ENCODE measurements at regions of chr11 and their contacts with region 1.

Region 1: GRCh38 chr11:88414385-88414861 is 76.9 kb upstream of the CTSC start:
- DNase-seq: peak; percentile 35
- ATAC-seq: peak; percentile 57
- H3K4me3 Mint-ChIP-seq: peak overlapping the region; percentile 33
- H3K27ac Mint-ChIP-seq: no peak overlapping the region
- H3K4me1 Mint-ChIP-seq: peaks cover 26% of the 10 kb centered on the region
- H3K27me3 Mint-ChIP-seq: no peaks in the 10 kb centered on the region
- CTCF ChIP-seq: no peak

Region 2: DNA sequence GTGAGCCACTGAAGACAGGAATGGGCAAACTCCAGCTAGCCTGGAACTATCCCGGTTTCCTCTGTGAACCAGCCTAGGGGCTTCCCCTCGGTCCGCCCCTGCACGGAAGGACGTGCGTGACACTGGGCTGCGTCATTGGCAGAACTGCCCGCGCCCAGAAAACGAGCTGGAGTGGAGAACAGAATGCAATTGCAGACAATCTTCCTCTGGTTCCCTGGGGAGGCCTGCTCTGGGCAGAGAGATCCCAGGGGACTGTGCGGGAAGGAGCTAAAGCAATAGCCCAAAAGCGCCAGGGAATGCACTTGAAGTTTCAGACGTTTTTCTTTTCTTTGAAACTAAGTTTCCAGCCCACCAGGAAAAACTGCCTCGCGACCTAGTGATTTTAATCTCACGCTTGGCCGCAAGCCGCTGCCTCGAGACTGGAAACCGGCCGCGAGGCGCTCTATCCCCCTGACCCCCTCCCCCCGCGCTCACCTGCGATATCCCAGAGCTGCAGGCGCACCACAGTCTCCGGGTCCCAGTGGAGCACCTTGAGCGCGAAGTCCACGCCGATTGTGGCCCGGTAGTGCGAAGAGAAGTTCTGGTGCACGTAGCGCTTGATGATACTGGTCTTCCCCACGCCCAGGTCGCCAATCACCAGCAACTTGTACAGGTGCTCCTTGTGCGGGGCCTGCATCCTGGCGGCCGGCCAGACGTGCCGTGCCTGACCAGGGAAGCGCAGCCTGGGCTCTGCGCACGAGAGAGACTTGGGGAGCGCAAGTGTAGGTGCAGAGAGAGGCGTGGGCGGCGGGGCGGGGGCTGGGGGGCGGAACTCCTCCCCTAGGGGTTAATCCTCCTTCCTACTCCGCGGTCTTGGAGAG is 239.5 kb before region 1 on chr11 and contains the start of gene RAB38:
- CTCF ChIA-PET with region 1: no interaction called
- POLR2A ChIA-PET with region 1: no interaction called
- intact Hi-C with region 1: loop called (anchors 10 kb)
- DNase-seq: peak; percentile 76
- ATAC-seq: peak; percentile 59
- H3K4me3 Mint-ChIP-seq: peak within 1 kb of the TSS; percentile 72
- H3K27ac Mint-ChIP-seq: peak within 1 kb of the TSS; percentile 79
- H3K4me1 Mint-ChIP-seq: peaks cover 41% of the 10 kb centered on the region
- H3K27me3 Mint-ChIP-seq: peaks cover 8% of the 10 kb centered on the region
- CTCF ChIP-seq: no peak
- total RNA-seq, gene RAB38: 3.2 to 3.4 TPM

Region 3: DNA sequence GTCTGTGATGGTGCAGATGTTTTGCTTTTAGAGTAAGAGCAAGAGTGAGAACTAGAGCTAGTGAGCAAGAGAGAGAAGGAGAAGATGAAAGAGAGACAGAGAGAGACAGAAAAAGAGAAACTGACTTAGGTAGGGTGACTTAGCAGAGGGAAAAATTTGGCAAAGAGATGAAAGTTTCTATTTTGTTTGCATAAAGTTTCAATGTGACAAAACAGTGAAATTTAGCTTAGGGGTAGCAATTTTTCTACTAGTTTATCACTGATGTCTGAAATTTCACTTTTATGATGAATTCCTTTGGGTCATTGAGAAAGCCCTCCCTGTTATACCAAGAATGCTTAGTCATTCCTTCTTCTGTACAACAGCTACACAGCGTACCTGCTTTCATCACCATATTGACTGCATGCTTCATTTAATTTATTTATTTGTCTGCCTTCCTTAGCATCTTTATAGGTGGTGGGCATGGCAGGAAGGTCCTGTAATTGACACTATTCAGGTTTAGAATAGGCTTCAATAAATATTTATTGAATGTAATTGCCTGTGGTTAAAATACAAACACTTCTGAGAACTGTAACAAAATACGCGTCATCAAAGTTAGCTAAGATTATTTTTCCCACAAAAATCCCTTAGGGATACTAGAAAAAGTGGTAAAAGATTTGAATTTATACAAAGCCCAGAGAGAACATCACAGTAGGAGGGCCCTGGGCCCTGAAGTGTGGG is 56.9 kb before region 1 on chr11:
- CTCF ChIA-PET with region 1: interaction called, 4 read pairs
- POLR2A ChIA-PET with region 1: no interaction called
- intact Hi-C with region 1: loop called (anchors 5 kb)
- DNase-seq: no peak
- ATAC-seq: peak; percentile 72
- H3K4me3 Mint-ChIP-seq: peak overlapping the region; percentile 35
- H3K27ac Mint-ChIP-seq: peak overlapping the region; percentile 87
- H3K4me1 Mint-ChIP-seq: peaks cover 54% of the 10 kb centered on the region
- H3K27me3 Mint-ChIP-seq: no peaks in the 10 kb centered on the region
- CTCF ChIP-seq: no peak

Measured in activated CD8-positive, alpha-beta T cell treated with anti-CD3 and anti-CD28 coated beads for 36 hours (primary cell).